Right ventricle myocardium inferior (tissue), 1 donor: ENCODE measurements at regions of chr18 and their contacts with region 1.

Region 1: GRCh38 chr18:53426656-53427184 is 797.7 kb downstream of the MBD2 start:
- DNase-seq: no peak
- ATAC-seq: no peak

Region 2: DNA sequence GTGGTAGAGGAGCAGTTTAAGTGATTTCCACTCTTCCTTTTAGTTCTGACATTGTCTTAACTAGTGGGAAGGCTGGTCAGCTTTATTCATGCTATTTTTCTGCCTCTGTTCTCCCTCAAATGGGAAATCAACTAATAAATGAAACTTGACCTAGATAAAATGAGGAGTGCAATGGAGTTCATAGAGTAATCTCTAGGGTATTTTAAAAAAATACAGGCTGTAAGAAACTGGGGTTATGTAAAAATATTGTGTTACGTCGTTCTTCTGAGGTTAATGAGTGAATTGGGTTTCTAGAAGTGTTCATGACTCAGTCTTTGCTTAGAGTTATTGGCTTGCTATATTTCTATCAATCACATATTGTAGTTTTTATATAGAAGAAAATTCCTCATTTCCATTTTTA is 63.3 kb after region 1 on chr18:
- intact Hi-C with region 1: loop called (anchors 10 kb)
- DNase-seq: no peak
- ATAC-seq: no peak

Region 3: DNA sequence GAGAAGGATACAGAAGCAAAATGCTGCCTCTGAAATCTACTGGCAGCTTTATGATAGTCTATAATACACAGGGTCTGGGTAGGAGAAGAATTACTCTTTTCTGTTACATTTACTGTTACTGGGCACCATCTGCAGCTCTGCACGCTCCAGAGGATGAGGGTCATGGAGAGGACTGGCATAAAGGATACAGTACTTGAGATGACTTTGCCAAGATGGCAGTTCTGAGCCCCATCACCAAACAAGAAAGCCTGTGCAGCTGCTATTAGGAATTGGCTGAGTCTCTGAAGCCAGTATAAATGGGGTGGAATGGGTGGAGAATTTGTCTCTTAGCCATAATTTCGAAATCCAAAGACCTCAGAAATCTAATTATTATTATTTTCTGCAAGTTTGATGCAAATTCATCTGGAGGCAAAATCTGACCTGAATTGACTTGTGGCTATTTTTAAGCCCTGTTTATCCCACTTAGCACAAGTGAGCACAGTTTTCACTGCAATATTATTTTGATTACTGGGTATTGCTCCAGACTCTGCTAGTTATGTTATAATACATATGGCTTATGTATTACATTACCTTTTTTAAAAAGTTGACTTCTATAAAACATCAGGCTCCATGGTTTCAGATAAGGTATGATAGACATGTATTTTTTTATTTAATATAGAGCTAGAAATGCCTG is 218.2 kb after region 1 on chr18:
- intact Hi-C with region 1: no loop called
- DNase-seq: no peak
- ATAC-seq: peak; percentile 42